Right ventricle myocardium superior (tissue), 1 donor: ENCODE measurements at regions of chr11 and their contacts with region 1.

Region 1: DNA sequence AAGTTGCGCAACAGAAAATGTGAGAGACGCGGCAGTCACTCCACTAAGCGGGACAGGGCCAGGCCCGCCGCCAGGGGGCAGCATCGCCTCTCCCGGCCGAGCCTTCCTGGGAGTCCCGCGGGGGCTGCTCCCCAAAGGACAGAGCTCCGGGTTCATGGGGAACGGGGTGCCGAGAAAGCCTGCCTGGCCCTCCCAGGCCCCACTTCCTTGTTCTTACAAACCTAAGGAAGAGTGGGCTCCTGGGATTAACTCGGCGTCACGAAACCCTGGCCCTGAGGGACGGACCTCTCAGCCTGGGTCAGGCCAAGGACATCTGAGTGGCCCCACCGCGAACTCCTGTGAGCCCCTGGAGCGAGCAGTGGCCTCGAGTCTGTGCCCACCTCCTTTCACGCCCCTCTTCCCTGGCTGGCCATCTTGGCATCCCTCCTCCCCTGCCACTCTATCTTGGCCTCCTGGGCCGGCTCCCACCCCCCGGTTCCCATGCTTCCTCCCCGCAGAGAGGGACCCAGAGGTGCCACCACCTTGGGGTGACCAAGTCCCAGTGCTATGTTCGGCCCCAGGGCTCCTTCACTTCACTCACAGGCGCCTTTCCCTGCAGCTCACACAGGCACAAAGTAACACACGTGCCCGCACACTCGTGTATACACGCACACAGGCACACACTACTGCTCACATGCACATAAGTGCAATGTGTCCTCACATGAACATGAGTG is 99.9 kb upstream of the FGF3 start:
- DNase-seq: peak; percentile 88
- ATAC-seq: peak; percentile 88

Region 2: DNA sequence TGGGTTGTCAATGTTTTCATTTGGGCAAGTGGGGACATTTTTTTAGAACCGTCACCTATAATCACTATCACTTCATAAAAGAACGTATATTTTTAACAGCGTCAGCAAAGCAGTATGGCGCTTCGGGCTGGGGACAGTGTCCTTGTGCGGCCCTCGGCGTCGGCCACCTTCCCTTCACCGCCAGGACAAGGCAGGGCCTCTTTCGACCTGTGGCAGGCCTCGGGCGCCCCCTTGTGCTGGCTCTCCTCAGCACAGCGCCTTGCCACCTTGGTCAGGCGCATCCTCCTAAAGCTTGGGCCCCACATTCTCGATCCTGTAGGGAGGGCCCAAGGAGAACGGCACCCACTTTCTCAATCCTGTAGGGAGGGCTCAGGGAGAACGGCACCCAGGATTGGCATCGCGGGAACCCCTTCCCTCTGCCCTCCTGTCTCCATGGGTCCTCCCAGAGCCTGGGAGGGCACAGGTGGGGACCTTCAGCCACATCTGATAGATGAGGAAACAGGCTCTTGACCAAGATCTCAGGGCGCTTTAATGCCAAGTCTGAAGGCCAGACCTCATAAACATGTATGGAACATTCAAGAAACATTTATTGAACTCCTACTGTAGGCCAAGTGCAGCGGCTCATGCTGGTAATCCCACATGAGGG is 272.5 kb after region 1 on chr11:
- intact Hi-C with region 1: loop called (anchors 2 kb)
- DNase-seq: peak; percentile 89
- ATAC-seq: peak; percentile 96